ENCODE measurements at regions of chr5 and their contacts with region 1.

Region 1: GRCh38 chr5:171418316-171418981 is 998 bp upstream of the FGF18 start:
- DNase-seq: peak; percentile 65
- H3K4me3 ChIP-seq: peak overlapping the region; percentile 17 to 32
- H3K27ac ChIP-seq: no peak overlapping the region
- H3K4me1 ChIP-seq: peaks cover 19% of the 10 kb centered on the region
- H3K27me3 ChIP-seq: no peaks in the 10 kb centered on the region
- CTCF ChIP-seq: peak; percentile 69 to 92 (median 86)
- POLR2A ChIP-seq: no peak

Region 2: GRCh38 chr5:171630027-171630669 is 211.7 kb after region 1 on chr5:
- intact Hi-C with region 1: loop called (anchors 2 kb)
- DNase-seq: peak; percentile 20
- H3K4me3 ChIP-seq: no peak overlapping the region
- H3K27ac ChIP-seq: no peak overlapping the region
- H3K4me1 ChIP-seq: no peaks in the 10 kb centered on the region
- H3K27me3 ChIP-seq: no peaks in the 10 kb centered on the region
- CTCF ChIP-seq: peak in 3 of 4 experiments; percentile 34 to 60 (median 48)
- POLR2A ChIP-seq: no peak

Region 3: GRCh38 chr5:171850324-171851285 is 432.2 kb after region 1 on chr5:
- intact Hi-C with region 1: loop called (anchors 5 kb)
- DNase-seq: no peak
- H3K4me3 ChIP-seq: no peak overlapping the region
- H3K27ac ChIP-seq: no peak overlapping the region
- H3K4me1 ChIP-seq: no peaks in the 10 kb centered on the region
- H3K27me3 ChIP-seq: no peaks in the 10 kb centered on the region
- CTCF ChIP-seq: peak in 1 of 4 experiments; percentile 18
- POLR2A ChIP-seq: no peak

Region 4: DNA sequence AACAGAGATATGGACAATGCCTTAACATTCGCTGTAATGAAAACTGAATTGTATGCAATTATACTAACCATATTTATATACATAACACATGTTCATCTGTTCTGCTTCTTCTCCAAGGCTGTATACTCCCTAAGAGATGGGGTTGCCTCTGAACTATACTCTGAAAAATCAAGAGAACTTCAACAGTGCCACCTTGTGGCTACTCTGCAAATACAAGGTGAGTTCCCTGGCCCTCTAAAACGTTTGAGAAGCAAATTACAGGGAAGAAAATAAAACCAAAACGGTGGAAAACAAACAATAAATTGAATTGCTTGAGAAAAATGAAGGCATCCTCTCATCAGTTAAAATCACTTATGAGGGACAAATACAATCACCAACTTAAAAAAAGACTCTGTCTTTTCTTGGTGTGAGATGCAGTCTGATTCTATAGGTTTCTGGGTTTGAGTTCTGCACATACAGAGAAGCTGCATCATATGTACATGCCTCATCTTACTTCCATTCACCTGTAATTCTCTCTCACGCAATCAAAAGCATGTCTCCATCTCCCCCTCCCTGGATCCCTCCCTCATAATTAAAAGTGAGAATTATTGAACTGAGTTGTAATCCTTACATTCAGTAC is 489.4 kb after region 1 on chr5:
- intact Hi-C with region 1: loop called (anchors 2 kb)
- DNase-seq: peak; percentile 54
- H3K4me3 ChIP-seq: no peak overlapping the region
- H3K27ac ChIP-seq: no peak overlapping the region
- H3K4me1 ChIP-seq: peaks cover 5% of the 10 kb centered on the region
- H3K27me3 ChIP-seq: no peaks in the 10 kb centered on the region
- CTCF ChIP-seq: peak; percentile 68 to 78 (median 73)
- POLR2A ChIP-seq: no peak

Region 5: GRCh38 chr5:172044631-172045314 is 626.3 kb after region 1 on chr5:
- intact Hi-C with region 1: loop called (anchors 5 kb)
- DNase-seq: no peak
- H3K4me3 ChIP-seq: no peak overlapping the region
- H3K27ac ChIP-seq: no peak overlapping the region
- H3K4me1 ChIP-seq: no peaks in the 10 kb centered on the region
- H3K27me3 ChIP-seq: no peaks in the 10 kb centered on the region
- CTCF ChIP-seq: no peak
- POLR2A ChIP-seq: no peak

Measured in prostate gland (tissue), 2 donors.